Cardiac septum (tissue), 1 donor: ENCODE measurements at regions of chr3 and their contacts with region 1.

Region 1: DNA sequence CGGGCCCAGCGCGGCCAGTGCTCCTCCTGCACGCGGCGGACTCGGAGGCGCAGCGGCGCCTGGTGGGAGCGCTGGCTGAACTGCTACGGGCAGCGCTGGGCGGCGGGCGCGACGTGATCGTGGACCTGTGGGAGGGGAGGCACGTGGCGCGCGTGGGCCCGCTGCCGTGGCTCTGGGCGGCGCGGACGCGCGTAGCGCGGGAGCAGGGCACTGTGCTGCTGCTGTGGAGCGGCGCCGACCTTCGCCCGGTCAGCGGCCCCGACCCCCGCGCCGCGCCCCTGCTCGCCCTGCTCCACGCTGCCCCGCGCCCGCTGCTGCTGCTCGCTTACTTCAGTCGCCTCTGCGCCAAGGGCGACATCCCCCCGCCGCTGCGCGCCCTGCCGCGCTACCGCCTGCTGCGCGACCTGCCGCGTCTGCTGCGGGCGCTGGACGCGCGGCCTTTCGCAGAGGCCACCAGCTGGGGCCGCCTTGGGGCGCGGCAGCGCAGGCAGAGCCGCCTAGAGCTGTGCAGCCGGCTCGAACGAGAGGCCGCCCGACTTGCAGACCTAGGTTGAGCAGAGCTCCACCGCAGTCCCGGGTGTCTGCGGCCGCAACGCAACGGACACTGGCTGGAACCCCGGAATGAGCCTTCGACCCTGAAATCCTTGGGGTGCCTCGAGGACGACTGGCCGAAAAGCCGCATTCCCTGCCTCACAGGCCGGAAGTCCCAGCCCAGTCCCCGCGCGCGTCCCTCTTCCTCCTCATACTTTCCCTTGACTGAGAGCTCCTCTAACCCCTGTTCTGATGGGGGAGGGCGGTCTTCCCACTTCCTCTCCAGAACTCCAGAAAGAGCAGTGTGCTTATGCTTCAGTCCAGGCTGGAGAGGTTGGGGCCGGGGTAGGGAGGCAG is 1.4 kb upstream of the IL17RC start:
- DNase-seq: peak; percentile 91

Region 2: GRCh38 chr3:9669720-9670432 is 245.6 kb before region 1 on chr3:
- intact Hi-C with region 1: no loop called
- DNase-seq: no peak

Region 3: GRCh38 chr3:9843715-9844438 is 71.6 kb before region 1 on chr3 and contains the start of gene RPUSD3:
- intact Hi-C with region 1: loop called (anchors 10 kb)
- DNase-seq: peak; percentile 100
- total RNA-seq, gene RPUSD3: 28.3 TPM

Region 4: GRCh38 chr3:9890249-9891071 is 25.0 kb before region 1 on chr3 and contains the start of gene JAGN1:
- intact Hi-C with region 1: loop called (anchors 2 kb)
- DNase-seq: peak; percentile 95
- total RNA-seq, gene JAGN1: 17.3 TPM

Region 5: GRCh38 chr3:9932843-9933560 is 17.5 kb after region 1 on chr3:
- intact Hi-C with region 1: loop called (anchors 2 kb)
- DNase-seq: peak; percentile 85